ENCODE measurements at regions of chr3 and their contacts with region 1.

Region 1: GRCh38 chr3:22908989-22909507 is 294.1 kb upstream of the UBE2E2 start:
- DNase-seq: no peak
- H3K4me3 ChIP-seq: no peak overlapping the region
- H3K27ac ChIP-seq: no peak overlapping the region
- H3K4me1 ChIP-seq: peaks cover 0 to 20% (median 11%) of the 10 kb centered on the region in 4 donors
- H3K27me3 ChIP-seq: no peaks in the 10 kb centered on the region
- CTCF ChIP-seq: peak in 2 of 4 experiments; percentile 10 to 44
- EP300 ChIP-seq: no peak
- POLR2A ChIP-seq: no peak

Region 2: GRCh38 chr3:22555753-22556435 is 353.2 kb before region 1 on chr3:
- intact Hi-C with region 1: loop called (anchors 5 kb)
- DNase-seq: no peak
- H3K4me3 ChIP-seq: no peak overlapping the region
- H3K27ac ChIP-seq: no peak overlapping the region
- H3K4me1 ChIP-seq: no peaks in the 10 kb centered on the region
- H3K27me3 ChIP-seq: no peaks in the 10 kb centered on the region
- CTCF ChIP-seq: no peak
- EP300 ChIP-seq: no peak
- POLR2A ChIP-seq: no peak

Region 3: DNA sequence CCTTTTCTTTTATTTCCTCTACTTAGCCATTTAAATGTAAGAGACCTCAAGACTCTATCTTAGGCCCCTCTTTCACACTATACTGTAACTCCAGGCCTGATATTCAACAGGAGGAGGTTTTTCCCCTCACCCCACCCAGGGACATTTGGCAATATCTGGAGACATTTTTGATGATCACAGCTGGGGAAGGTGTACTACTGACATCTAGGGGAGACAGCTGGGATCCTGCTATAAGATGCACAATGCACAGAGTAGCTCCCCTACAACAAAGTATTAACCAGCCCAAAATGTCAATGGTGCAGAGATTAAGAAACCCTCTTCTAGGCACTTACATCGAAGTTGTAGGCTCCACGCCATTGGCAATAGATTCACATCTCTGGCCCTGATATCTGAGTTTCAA is 223.5 kb before region 1 on chr3:
- intact Hi-C with region 1: loop called (anchors 10 kb)
- DNase-seq: no peak
- H3K4me3 ChIP-seq: no peak overlapping the region
- H3K27ac ChIP-seq: no peak overlapping the region
- H3K4me1 ChIP-seq: peaks cover 0 to 21% (median 17%) of the 10 kb centered on the region in 4 donors
- H3K27me3 ChIP-seq: no peaks in the 10 kb centered on the region
- CTCF ChIP-seq: no peak
- EP300 ChIP-seq: no peak
- POLR2A ChIP-seq: no peak

Region 4: GRCh38 chr3:22819209-22819608 is 89.8 kb before region 1 on chr3:
- intact Hi-C with region 1: no loop called
- DNase-seq: no peak
- H3K4me3 ChIP-seq: no peak overlapping the region
- H3K27ac ChIP-seq: no peak overlapping the region
- H3K4me1 ChIP-seq: no peaks in the 10 kb centered on the region
- H3K27me3 ChIP-seq: no peaks in the 10 kb centered on the region
- CTCF ChIP-seq: no peak
- EP300 ChIP-seq: no peak
- POLR2A ChIP-seq: no peak

Measured in sigmoid colon (tissue), 7 donors.